Calu3 (cell line): ENCODE measurements at regions of chr2 and their contacts with region 1.

Region 1: DNA sequence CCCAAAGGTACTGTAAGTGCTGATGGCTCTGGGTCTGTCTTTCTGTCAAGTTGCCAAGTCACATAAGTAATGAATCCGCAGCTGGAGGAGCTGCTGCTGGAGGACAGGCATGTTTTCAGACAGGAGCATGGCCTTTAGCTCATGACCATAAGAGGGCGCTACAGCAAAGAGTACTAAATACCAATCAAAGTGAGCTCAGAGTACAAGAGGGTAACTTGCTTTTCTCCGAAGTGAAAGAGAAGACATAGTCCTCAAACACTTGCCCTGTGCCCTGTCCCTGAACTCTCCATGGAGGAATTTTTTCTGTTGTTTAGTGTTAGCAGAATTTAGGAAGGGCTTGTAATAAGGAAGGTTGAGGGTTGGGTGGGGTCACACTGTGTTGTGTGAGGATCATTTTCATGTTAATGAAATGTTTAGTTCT is 58.0 kb upstream of the EML6 start:
- DNase-seq: peak; percentile 40
- H3K4me3 Mint-ChIP-seq: no peak overlapping the region
- H3K27ac Mint-ChIP-seq: no peak overlapping the region
- H3K4me1 Mint-ChIP-seq: peaks cover 9% of the 10 kb centered on the region
- H3K27me3 Mint-ChIP-seq: no peaks in the 10 kb centered on the region
- CTCF ChIP-seq: peak; percentile 38

Region 2: DNA sequence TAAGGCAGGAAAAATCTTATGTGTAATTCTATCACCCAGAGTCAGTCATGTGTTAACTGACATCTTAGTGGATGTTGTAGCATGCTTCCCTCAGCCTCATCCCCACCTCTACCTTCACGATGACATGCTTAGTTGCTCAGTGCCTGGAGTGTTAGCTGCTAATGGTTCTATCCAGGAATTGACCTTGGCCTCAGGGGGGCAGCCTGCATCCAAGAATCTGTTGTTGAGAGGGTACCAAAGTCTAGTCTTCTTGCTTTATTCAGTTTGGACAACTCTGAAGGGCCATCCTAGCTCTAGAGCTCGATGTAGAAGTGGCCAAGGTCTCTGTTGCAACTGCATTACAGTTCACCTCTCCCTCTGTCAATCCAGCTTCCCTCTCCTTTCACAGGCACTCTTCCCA is 488.9 kb before region 1 on chr2:
- CTCF ChIA-PET with region 1: no interaction called
- intact Hi-C with region 1: no loop called
- DNase-seq: peak; percentile 42
- H3K4me3 Mint-ChIP-seq: no peak overlapping the region
- H3K27ac Mint-ChIP-seq: no peak overlapping the region
- H3K4me1 Mint-ChIP-seq: no peaks in the 10 kb centered on the region
- H3K27me3 Mint-ChIP-seq: no peaks in the 10 kb centered on the region
- CTCF ChIP-seq: no peak

Region 3: DNA sequence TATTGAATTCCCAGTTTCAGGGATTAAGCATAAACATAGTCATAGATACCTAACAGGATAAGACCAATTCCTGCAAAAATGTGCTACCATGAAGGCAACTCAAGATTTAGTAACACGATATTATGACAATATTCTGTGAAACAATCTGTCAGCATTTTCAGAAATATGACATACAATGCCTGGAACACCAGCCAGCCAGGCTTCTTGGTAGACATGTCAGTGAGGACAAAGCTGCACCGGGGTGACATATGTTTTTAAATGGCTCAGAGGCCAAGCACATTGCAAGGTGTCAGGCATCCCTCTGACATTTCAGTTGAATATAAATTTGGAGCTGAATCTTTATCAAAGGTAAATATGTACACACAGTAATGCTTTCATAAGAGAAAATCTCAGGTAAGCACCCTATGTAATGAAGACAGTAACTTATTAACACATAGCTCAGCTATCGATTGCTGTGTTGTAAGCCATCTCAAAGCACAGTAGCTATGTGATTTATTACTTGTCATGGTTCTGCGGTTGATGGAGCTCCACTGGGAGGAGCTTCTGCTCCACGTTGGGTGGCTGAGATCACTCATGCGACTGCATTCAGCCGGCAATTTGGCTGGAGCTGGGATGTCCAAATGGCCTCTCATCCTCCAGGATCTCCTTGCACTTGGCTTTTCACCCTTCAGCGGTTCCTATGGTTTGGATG is 26.1 kb after region 1 on chr2:
- CTCF ChIA-PET with region 1: interaction called, 13 read pairs
- intact Hi-C with region 1: no loop called
- DNase-seq: peak; percentile 69
- H3K4me3 Mint-ChIP-seq: no peak overlapping the region
- H3K27ac Mint-ChIP-seq: no peak overlapping the region
- H3K4me1 Mint-ChIP-seq: peaks cover 11% of the 10 kb centered on the region
- H3K27me3 Mint-ChIP-seq: no peaks in the 10 kb centered on the region
- CTCF ChIP-seq: no peak

Region 4: DNA sequence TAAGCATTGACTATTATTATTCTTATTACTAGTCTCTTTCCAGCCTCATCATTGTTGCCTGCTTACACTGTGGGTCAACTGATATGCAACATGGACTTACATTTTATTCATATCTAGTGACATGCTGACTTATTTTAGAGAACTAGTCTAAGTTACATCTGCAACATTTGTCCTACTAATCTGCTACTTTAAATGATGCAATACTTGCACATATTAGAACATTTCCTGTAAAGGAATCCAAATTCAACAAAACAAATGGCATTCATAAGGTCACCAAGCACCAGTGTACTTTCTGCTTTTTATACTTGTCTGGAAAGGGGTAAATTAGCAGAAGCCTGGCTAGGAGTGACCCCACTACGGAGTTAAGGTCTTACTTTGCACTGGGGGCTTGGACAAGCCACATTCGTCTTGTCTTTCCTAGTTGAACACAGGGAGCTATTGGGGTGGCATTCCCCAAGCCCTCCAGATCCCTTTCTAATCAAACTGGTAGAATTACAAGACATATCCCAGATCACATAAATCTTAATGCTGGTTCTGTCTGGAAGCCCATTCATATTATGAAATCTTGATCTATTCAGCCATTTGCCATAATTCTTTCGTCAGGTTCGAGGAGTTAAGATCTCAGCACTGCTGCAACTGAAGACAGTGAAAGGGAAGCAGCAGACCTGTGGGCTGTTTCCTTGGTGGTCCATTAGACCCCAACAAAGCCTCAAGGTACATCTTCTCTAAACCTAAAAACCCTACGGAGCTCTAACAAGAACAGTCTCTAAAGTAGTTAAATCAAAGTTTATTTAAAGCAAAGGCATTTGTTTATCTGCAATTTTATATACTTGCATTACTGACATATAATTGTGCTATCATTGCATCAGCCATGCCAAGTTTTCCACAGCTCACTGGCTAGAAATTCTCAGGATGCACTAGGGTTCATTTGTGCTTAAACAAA is 434.7 kb after region 1 on chr2:
- CTCF ChIA-PET with region 1: no interaction called
- intact Hi-C with region 1: no loop called
- DNase-seq: no peak
- H3K4me3 Mint-ChIP-seq: peak overlapping the region; percentile 24
- H3K27ac Mint-ChIP-seq: no peak overlapping the region
- H3K4me1 Mint-ChIP-seq: no peaks in the 10 kb centered on the region
- H3K27me3 Mint-ChIP-seq: no peaks in the 10 kb centered on the region
- CTCF ChIP-seq: no peak